ENCODE measurements at regions of chr6 and their contacts with region 1.

Region 1: DNA sequence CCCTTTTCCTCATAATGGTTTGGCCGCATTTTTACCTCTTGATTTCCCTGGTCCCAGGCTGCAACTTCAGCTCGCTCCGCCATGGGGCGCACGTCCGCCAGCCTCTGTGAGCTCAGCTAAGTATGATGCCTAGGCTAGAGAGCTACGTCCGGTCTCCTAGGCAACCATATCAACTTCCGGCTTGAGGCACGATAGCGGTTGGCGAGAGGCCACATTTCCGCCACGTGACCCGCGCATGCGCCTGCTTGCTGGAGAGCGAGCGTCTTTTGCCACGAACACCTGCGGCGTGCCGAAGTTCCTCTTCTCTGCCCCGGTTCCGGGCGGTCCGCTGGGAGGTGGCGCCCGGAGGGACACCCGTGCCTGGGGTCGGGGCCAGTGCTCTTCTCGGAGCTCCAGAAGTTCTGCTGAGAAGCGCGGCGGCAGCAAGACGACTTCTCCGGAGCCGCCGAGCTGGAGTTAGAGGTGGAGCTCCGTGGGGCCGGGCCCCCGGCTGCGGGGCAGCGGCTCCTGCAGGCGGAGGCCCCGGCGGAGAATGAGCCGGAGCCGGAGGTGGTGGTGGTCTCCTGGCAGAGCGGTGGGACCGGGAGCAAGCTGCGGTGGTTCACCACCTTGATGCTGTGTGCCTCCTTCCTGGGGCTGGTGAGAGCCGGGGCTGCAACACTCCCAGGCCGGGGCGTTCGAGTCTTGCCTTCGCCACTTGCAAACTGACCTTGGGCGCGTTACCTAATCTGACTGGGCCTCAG is 172.0 kb downstream of the SLC16A10 start:
- DNase-seq: peak; percentile 99
- ATAC-seq: peak; percentile 96
- H3K4me3 Mint-ChIP-seq: peak overlapping the region; percentile 79
- H3K27ac Mint-ChIP-seq: peak overlapping the region; percentile 87
- H3K4me1 Mint-ChIP-seq: peaks cover 30% of the 10 kb centered on the region
- H3K27me3 Mint-ChIP-seq: peaks cover 3% of the 10 kb centered on the region

Region 2: DNA sequence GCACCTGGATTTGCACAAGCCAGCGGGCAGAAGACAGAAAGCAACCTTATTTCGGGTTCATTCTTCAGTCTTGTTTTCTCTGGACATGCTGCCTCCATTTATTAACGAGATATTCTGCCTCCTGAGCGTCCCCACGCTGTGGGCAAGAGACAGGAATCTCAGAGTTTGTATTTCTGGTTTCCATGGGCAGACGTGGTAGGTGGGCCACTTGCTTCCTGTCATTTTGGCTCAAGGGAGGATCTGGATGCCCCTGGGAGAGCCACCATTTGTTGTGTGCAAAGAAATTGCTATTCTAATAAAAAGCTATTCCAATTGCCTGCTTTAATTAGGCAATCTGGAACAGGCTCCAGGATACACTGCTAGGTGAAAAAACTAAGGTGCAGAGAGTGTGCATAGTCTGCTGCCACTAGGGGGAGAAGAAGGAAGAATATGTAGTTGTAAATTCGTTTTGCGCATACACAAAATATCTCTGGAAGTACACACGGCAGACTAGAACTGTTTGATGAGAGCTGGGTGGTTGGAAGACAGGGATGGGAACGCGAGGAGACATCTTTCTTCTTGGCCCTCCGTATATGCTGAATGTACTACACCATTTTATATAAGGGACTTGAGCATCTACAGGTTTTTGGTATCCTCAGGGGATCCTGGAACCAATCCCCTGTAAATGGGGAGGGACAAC is 202.0 kb before region 1 on chr6:
- CTCF ChIA-PET with region 1: interaction called, 11 read pairs
- POLR2A ChIA-PET with region 1: no interaction called
- DNase-seq: peak; percentile 20
- ATAC-seq: peak; percentile 58
- H3K4me3 Mint-ChIP-seq: no peak overlapping the region
- H3K27ac Mint-ChIP-seq: no peak overlapping the region
- H3K4me1 Mint-ChIP-seq: no peaks in the 10 kb centered on the region
- H3K27me3 Mint-ChIP-seq: peaks cover 6% of the 10 kb centered on the region

Region 3: GRCh38 chr6:111367393-111368088 is 108.3 kb after region 1 on chr6:
- CTCF ChIA-PET with region 1: interaction called, 10 read pairs
- POLR2A ChIA-PET with region 1: no interaction called
- DNase-seq: peak; percentile 48
- ATAC-seq: peak; percentile 58
- H3K4me3 Mint-ChIP-seq: no peak overlapping the region
- H3K27ac Mint-ChIP-seq: no peak overlapping the region
- H3K4me1 Mint-ChIP-seq: peaks cover 13% of the 10 kb centered on the region
- H3K27me3 Mint-ChIP-seq: no peaks in the 10 kb centered on the region

Region 4: GRCh38 chr6:111483736-111484632 is 224.7 kb after region 1 on chr6:
- CTCF ChIA-PET with region 1: interaction called, 129 read pairs
- POLR2A ChIA-PET with region 1: interaction called, 32 read pairs
- DNase-seq: peak; percentile 89
- ATAC-seq: peak; percentile 70
- H3K4me3 Mint-ChIP-seq: peak overlapping the region; percentile 99
- H3K27ac Mint-ChIP-seq: peak overlapping the region; percentile 99
- H3K4me1 Mint-ChIP-seq: peaks cover 53% of the 10 kb centered on the region
- H3K27me3 Mint-ChIP-seq: no peaks in the 10 kb centered on the region

Region 5: DNA sequence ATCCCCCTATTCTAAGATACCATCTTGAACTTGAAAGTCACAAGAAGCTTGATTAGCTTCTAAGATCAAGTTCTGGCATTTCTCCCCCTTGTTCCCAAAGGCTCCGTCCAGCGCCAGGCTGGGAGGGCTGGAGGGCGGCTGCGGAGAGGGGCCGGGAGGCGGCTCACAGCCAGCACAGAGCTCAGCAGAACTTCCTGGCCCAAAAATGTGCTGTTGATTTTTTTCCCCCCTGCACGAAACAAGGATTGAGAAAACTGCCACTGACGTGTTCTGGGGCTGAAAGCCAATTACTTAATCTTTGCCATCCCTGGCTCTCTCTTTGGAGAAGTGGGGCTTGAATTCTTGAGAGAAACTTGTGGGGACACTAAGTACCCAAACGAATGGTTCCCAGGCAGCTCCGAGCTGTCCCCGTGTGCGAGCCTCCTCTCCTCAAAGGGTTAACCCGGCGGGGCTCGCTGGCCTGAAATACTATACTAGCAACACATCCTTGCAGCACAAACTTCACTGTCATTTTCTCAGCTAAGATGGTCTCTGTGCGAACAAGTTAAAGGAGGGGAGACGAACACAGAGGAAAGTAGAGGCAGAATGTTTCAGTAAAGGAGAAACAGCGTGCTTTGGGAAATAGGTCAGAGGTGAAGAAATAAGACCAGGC is 346.0 kb after region 1 on chr6:
- CTCF ChIA-PET with region 1: interaction called, 27 read pairs
- POLR2A ChIA-PET with region 1: interaction called, 9 read pairs
- DNase-seq: peak; percentile 49
- ATAC-seq: peak; percentile 56
- H3K4me3 Mint-ChIP-seq: peak overlapping the region; percentile 82
- H3K27ac Mint-ChIP-seq: peak overlapping the region; percentile 88
- H3K4me1 Mint-ChIP-seq: peaks cover 47% of the 10 kb centered on the region
- H3K27me3 Mint-ChIP-seq: no peaks in the 10 kb centered on the region

Region 6: GRCh38 chr6:113065611-113066010 is 1806.4 kb after region 1 on chr6:
- CTCF ChIA-PET with region 1: no interaction called
- POLR2A ChIA-PET with region 1: no interaction called
- DNase-seq: no peak
- ATAC-seq: no peak
- H3K4me3 Mint-ChIP-seq: no peak overlapping the region
- H3K27ac Mint-ChIP-seq: no peak overlapping the region
- H3K4me1 Mint-ChIP-seq: no peaks in the 10 kb centered on the region
- H3K27me3 Mint-ChIP-seq: no peaks in the 10 kb centered on the region